Left cardiac atrium (tissue), 4 donors: ENCODE measurements at regions of chr7 and their contacts with region 1.

Region 1: DNA sequence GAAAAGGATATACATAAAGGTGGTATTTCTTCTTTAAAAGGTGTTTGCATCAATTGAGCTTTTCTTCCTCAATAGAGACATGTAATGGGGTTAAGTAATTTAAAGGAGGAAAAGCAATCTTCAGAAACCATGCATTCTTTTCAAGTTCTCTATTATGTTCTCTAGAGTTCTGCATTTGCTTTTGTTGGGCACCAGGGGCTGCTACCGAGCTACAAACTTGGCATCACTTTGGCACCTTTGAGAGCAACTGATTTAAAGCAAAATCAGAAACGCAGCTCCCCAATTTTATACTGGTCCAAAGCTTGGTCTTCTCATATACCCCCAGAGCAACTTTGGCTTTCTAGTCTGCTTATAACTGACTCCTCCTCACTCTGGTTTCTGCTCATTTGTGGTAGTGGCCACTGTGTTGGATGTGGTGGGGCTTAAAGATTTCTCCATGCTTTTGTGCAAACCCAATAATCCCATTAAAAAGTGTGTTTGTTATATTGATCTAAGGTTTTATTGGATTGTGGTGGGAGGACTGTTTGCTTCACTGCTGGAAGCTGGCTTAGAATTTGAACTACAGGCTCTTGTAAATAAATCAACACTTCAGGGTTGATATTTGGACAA is 712.1 kb downstream of the PHTF2 start:
- DNase-seq: peak; percentile 24
- ATAC-seq: peak in 1 of 2 donors; percentile 53

Region 2: DNA sequence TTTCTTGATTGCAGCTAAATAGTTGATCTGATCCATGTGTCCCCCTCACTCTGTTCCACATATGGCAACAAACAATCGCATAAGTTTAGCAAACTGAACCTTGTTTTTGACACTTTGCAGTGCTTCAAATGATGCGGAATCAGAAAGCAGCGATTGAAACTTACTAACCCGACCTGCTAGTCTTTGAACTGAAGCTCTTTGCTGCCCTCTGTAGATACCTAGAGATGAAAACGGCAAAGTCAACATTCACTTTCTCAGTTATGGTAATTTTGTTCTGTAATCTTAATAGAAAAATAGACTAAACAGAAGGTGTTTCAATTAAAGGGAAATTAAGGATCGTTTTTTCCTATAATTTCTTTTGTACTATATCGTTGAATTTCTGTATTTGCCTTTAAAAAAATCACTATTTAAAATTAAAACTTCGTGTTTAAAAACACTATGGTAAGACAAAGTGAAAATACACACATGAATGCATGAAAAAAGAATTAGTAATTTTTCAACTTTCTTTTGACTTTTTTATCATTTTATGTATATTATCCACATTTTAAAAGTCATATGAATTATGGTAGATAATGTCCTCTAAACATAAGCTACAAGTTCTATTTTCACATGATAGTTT is 666.3 kb after region 1 on chr7:
- intact Hi-C with region 1: loop called in 1 of 2 experiments (anchors 5 kb)
- DNase-seq: no peak
- ATAC-seq: peak in 1 of 2 donors; percentile 63